ENCODE measurements at regions of chr22 and their contacts with region 1.

Region 1: GRCh38 chr22:48492366-48493320 is 1335.0 kb downstream of the BRD1 start:
- DNase-seq: peak; percentile 34 to 39
- ATAC-seq: peak in 7 of 8 donors; percentile 48 to 79 (median 56)
- H3K4me3 ChIP-seq: no peak overlapping the region
- H3K27ac ChIP-seq: no peak overlapping the region
- H3K4me1 ChIP-seq: peaks cover 0 to 16% (median 7%) of the 10 kb centered on the region in 9 donors
- H3K27me3 ChIP-seq: peaks cover 8 to 82% (median 65%) of the 10 kb centered on the region in 7 donors
- CTCF ChIP-seq: peak; percentile 33 to 77 (median 68)

Region 2: GRCh38 chr22:46798366-46799350 is 1694.0 kb before region 1 on chr22:
- intact Hi-C with region 1: loop called in 3 of 10 experiments (anchors 5 to 10 kb)
- DNase-seq: peak; percentile 56 to 77
- ATAC-seq: peak; percentile 49 to 86 (median 84)
- H3K4me3 ChIP-seq: no peak overlapping the region
- H3K27ac ChIP-seq: no peak overlapping the region
- H3K4me1 ChIP-seq: peaks cover 0 to 20% (median 12%) of the 10 kb centered on the region in 9 donors
- H3K27me3 ChIP-seq: no peaks in the 10 kb centered on the region
- CTCF ChIP-seq: peak; percentile 75 to 94 (median 93)

Region 3: GRCh38 chr22:47213571-47214230 is 1278.9 kb before region 1 on chr22:
- intact Hi-C with region 1: loop called in 1 of 10 experiments (anchors 10 kb)
- DNase-seq: no peak
- ATAC-seq: no peak
- H3K4me3 ChIP-seq: no peak overlapping the region
- H3K27ac ChIP-seq: no peak overlapping the region
- H3K4me1 ChIP-seq: no peaks in the 10 kb centered on the region
- H3K27me3 ChIP-seq: peaks cover 0 to 4% (median 0%) of the 10 kb centered on the region in 7 donors
- CTCF ChIP-seq: peak; percentile 27 to 73 (median 54)

Region 4: DNA sequence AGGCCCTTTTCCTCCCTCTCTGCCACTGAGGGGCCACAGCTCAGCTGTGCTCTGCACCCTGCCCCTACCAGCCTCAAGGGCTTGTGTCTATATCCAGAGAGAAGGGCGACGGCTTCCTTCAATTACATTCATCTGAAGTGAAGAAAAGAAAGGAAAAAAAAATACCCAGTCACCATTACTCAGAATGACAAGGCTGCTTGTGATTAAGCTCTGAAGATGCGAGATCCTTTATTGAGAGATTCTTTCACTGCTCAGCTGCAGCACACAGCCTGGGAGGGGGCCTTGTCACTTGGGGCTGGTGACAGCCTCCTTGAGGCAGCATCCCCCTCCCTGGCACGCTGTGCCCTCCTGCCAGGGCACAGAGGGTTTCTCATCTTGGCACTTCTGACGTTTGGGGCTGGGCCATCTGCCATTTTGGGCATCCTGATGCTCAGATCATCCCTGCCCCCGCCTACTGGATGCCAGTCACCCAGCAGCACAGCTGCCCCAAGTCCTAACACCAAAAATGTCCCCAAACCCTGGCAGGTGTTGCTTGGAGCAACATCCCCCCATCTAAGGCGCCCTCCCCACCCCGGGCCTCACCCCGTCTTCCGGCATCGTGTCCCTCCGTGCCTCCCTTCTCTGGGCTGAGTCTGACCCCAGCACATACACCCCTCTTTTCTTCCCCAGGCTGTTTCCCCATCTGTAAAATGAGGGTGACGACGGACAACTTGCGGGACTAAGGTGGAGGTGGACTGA is 59.7 kb before region 1 on chr22:
- intact Hi-C with region 1: no loop called
- DNase-seq: no peak
- ATAC-seq: no peak
- H3K4me3 ChIP-seq: no peak overlapping the region
- H3K27ac ChIP-seq: no peak overlapping the region
- H3K4me1 ChIP-seq: no peaks in the 10 kb centered on the region
- H3K27me3 ChIP-seq: peaks cover 0 to 35% (median 20%) of the 10 kb centered on the region in 7 donors
- CTCF ChIP-seq: no peak

Measured in heart right ventricle (tissue), 16 donors.